ENCODE measurements at regions of chr18 and their contacts with region 1.

Region 1: DNA sequence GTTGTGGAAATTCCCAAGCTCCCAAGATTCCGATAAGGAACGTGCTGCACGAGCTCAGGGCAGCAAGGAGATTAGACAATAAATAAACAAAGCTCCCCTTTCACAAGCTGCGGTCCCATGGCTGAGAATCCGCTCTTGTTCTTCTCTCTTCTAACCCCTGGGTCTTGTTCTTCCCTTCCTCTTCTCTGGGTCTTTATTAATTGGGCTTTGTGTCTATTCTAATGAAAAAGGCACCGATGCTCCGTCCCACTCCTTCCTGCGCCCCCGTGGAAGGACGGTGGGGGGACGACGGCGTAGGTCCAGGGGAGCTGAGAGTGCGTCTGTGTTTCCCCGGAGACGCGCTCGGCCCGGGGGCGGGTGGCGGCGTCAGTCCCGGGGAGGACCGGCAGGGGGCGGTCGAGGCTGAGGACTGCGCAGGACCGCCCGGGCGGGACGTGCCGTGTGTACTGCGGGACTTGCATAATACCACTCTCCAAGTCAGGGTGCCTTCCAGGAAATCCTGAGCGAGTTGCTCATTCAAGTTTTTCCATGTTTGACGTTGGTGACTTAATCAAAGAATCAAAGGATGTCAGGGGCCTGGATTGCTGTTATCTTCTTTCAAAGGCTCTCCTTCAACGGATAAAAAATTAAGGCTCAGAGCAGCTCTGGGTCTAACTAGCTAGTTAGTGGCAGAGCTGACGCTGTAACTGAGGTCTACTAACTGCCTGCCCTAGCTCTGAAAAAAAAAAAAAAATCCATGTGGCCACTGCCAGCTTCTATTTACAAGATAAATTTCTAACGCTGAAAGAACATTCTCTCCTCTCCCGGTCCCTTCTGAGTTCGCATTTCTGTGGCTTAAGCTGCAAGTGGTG is 321.4 kb downstream of the TGIF1 start:
- DNase-seq: peak; percentile 78
- H3K4me3 ChIP-seq: peak overlapping the region; percentile 47
- CTCF ChIP-seq: peak; percentile 99

Region 2: DNA sequence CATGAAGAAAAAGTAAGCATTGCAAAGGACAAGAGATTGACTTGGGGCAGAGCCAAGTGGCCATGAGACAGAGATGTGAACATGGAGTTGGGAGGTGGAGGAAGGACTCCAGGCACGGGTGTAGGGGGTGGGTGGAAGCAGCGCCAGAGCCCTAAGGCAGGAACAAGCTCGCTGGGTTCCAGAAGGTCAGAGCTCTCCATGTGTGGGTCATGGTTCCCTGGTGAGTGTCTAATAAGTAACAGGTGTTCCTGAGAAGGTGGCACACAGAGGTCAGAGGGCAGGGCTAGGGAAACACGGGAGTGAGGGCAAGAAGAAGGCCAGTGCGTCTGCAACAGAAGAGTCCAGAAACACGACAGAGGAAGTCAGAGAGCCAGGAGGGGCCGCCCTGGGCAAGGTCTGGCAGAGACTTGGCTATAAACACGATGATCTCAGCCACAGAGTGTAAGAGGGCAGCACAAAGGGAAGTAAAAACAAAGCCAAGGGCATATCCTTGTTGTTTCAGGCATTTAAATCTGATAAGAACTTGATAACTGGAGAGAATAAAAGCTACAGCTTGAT is 60.6 kb before region 1 on chr18:
- CTCF ChIA-PET with region 1: interaction called, 14 read pairs
- POLR2A ChIA-PET with region 1: no interaction called
- DNase-seq: no peak
- H3K4me3 ChIP-seq: no peak overlapping the region
- CTCF ChIP-seq: no peak

Region 3: DNA sequence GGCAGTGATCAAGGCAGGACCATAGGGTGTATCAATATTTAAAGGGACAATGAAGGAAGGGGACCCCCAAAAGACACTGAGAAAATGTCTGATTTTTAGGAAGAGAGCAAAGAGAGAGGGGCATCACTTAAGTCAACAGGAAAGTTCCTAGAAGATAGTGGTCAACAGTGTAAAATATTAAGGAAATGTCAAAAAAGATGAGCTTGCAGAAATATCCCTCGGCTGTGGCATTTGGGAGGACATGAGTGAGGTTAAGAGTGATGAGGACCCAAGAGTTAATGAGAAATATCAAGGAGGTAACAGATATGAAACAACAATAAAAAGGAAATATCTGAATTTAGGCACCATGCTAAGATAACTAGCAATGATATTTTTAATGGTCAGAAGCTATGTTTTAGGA is 18.2 kb after region 1 on chr18:
- CTCF ChIA-PET with region 1: interaction called, 45 read pairs
- POLR2A ChIA-PET with region 1: no interaction called
- DNase-seq: no peak
- H3K4me3 ChIP-seq: no peak overlapping the region
- CTCF ChIP-seq: no peak

Region 4: DNA sequence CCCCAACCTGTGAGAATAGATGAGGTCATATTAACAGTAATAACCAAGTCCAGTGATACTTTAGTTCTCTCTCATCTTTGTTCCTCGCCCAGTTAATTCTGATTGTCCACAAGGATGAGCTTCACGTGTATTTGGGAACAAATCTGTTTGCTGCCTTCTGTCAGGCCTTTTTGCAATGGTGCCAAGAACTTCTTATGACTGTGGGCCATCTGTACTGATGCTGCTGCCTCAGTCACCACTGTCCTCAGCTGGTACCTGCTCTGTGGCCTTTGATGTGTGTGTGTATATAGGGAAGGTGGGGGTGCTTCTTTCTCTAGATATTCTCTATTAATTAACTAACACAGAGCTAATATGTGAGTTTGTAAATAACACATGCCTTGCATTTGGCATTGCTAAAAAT is 71.5 kb after region 1 on chr18:
- CTCF ChIA-PET with region 1: interaction called, 13 read pairs
- POLR2A ChIA-PET with region 1: no interaction called
- DNase-seq: no peak
- H3K4me3 ChIP-seq: no peak overlapping the region
- CTCF ChIP-seq: no peak

Region 5: GRCh38 chr18:3983351-3983969 is 212.1 kb after region 1 on chr18:
- CTCF ChIA-PET with region 1: interaction called, 31 read pairs
- POLR2A ChIA-PET with region 1: no interaction called
- DNase-seq: peak; percentile 47
- H3K4me3 ChIP-seq: no peak overlapping the region
- CTCF ChIP-seq: no peak

Measured in AG04449 (cell line).